Activated CD4-positive, alpha-beta T cell treated with anti-CD3 and anti-CD28 coated beads, Interleukin-2, amount 10 ng/mL, durations not matched to agents 24 days and 14 days (primary cell): ENCODE measurements at regions of chr17 and their contacts with region 1.

Region 1: DNA sequence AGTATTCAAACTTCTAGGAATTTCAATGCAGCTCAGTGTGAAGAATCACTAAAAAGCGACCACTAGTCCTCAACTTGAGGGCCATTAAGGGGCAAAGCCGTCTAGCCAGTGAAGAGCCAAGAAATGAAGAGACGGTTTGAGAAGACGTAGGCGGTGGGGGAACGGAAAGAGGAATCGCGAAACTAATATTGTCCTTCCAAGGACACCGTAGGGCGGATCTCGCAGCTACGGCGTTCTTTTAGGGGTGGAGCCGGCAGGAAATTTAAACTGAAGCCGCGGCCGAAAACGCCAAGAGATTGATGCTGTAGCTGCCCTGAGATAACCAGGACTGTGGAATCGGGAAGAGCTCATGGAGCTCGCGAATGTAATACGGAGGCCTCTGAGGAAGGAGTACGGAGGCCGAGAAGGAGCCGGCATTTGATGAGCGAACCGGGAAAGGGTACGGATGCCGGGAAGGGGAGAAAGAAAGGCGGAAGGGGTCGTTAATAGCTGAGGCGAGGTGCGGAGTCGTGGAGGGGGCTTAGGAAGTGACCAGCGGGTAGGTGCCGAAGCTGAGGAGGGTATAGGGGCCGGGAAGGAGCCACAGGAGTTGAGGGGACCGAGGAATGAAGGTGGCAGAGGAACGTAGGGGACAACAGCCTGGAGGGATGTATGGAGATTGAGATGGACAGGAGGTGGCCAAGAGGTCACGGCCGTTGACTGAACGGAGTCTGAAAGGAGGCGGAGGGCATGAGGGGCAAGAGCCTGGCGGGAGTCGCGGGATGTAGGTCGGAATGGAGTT is at the start of gene DBF4B:
- DNase-seq: peak; percentile 96
- H3K4me3 Mint-ChIP-seq: no peak within 1 kb of the TSS
- H3K27ac Mint-ChIP-seq: peak within 1 kb of the TSS; percentile 17
- H3K4me1 Mint-ChIP-seq: peaks cover 5% of the 10 kb centered on the region
- H3K27me3 Mint-ChIP-seq: peaks cover 7% of the 10 kb centered on the region
- total RNA-seq, gene DBF4B: 25.2 and 25.7 TPM in 2 replicates

Region 2: GRCh38 chr17:44689477-44690217 is 18.9 kb before region 1 on chr17 and contains the start of gene CCDC43:
- intact Hi-C with region 1: loop called (anchors 1 kb)
- DNase-seq: peak; percentile 98
- H3K4me3 Mint-ChIP-seq: peak within 1 kb of the TSS; percentile 100
- H3K27ac Mint-ChIP-seq: peak within 1 kb of the TSS; percentile 96
- H3K4me1 Mint-ChIP-seq: peaks cover 31% of the 10 kb centered on the region
- H3K27me3 Mint-ChIP-seq: peaks cover 2% of the 10 kb centered on the region
- total RNA-seq, gene CCDC43: 42.7 and 43.9 TPM in 2 replicates